CD8-positive, alpha-beta T cell (primary cell): ENCODE measurements at regions of chrX and their contacts with region 1.

Region 1: GRCh38 chrX:3415011-3415410 is 68.6 kb upstream of the MXRA5 start:
- DNase-seq: no peak
- ATAC-seq: no peak
- H3K4me3 ChIP-seq: no peak overlapping the region
- H3K4me3 Mint-ChIP-seq: no peak overlapping the region
- H3K27ac ChIP-seq: no peak overlapping the region
- H3K27ac Mint-ChIP-seq: no peak overlapping the region
- H3K4me1 ChIP-seq: no peaks in the 10 kb centered on the region
- H3K4me1 Mint-ChIP-seq: no peaks in the 10 kb centered on the region
- H3K27me3 ChIP-seq: peaks cover 0 to 2% of the 10 kb centered on the region in 2 experiments
- H3K27me3 Mint-ChIP-seq: peaks cover 3% of the 10 kb centered on the region
- CTCF ChIP-seq: no peak

Region 2: GRCh38 chrX:3450881-3451570 is 36.0 kb after region 1 on chrX:
- CTCF ChIA-PET with region 1: no interaction called
- POLR2A ChIA-PET with region 1: no interaction called
- intact Hi-C with region 1: loop called in 1 of 2 experiments (anchors 2 kb)
- DNase-seq: no peak
- ATAC-seq: no peak
- H3K4me3 ChIP-seq: no peak overlapping the region
- H3K4me3 Mint-ChIP-seq: no peak overlapping the region
- H3K27ac ChIP-seq: no peak overlapping the region
- H3K27ac Mint-ChIP-seq: no peak overlapping the region
- H3K4me1 ChIP-seq: no peaks in the 10 kb centered on the region
- H3K4me1 Mint-ChIP-seq: no peaks in the 10 kb centered on the region
- H3K27me3 ChIP-seq: no peaks in the 10 kb centered on the region
- H3K27me3 Mint-ChIP-seq: no peaks in the 10 kb centered on the region
- CTCF ChIP-seq: no peak